ENCODE measurements at regions of chr16 and their contacts with region 1.

Region 1: GRCh38 chr16:19907161-19907992 is 22.7 kb upstream of the GPRC5B start:
- DNase-seq: peak; percentile 79
- H3K4me3 ChIP-seq: peak overlapping the region in 1 of 2 experiments; percentile 46; a peak in 1 of 4 replicates
- H3K27ac ChIP-seq: no peak overlapping the region; a peak in 1 of 4 replicates
- H3K4me1 ChIP-seq: no peaks in the 10 kb centered on the region; a peak in 1 of 4 replicates
- H3K27me3 ChIP-seq: no peaks in the 10 kb centered on the region; the same call in 1 of the 2 replicates
- CTCF ChIP-seq: peak; percentile 96
- EP300 ChIP-seq: no peak
- RAD21 ChIP-seq: peak; percentile 92

Region 2: DNA sequence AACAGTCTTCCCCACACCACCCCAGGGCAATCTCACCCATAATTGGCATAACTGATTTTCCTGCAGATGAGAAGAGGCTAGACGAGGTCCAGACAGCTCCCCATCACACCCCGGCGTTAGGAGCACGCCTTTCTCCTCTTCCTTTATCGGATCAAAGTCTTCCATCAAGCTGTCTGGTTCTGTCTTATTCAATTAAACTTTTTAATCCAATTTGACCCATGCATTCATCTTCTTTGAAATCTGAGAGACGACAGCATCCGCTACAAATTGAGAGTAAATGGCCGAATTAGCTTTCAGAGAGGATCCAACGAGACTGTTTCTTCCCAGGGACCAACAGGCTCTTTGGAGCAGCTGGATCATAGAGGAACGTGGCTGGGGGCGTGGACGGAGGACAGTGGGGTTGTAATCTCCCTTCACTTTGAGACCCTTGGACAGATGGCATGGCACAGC is 21.7 kb after region 1 on chr16:
- CTCF ChIA-PET with region 1: interaction called, 32 read pairs
- POLR2A ChIA-PET with region 1: no interaction called
- DNase-seq: peak; percentile 47
- H3K4me3 ChIP-seq: no peak overlapping the region
- H3K27ac ChIP-seq: peak overlapping the region in 1 of 2 experiments; percentile 74; a peak in 1 of 4 replicates
- H3K4me1 ChIP-seq: peaks cover 0 to 14% of the 10 kb centered on the region in 2 experiments; a peak in 2 of 4 replicates
- H3K27me3 ChIP-seq: no peaks in the 10 kb centered on the region; the same call in 1 of the 2 replicates
- CTCF ChIP-seq: no peak
- EP300 ChIP-seq: peak in 1 of 2 experiments; percentile 59; a peak in 1 of 4 replicates
- RAD21 ChIP-seq: no peak

Region 3: DNA sequence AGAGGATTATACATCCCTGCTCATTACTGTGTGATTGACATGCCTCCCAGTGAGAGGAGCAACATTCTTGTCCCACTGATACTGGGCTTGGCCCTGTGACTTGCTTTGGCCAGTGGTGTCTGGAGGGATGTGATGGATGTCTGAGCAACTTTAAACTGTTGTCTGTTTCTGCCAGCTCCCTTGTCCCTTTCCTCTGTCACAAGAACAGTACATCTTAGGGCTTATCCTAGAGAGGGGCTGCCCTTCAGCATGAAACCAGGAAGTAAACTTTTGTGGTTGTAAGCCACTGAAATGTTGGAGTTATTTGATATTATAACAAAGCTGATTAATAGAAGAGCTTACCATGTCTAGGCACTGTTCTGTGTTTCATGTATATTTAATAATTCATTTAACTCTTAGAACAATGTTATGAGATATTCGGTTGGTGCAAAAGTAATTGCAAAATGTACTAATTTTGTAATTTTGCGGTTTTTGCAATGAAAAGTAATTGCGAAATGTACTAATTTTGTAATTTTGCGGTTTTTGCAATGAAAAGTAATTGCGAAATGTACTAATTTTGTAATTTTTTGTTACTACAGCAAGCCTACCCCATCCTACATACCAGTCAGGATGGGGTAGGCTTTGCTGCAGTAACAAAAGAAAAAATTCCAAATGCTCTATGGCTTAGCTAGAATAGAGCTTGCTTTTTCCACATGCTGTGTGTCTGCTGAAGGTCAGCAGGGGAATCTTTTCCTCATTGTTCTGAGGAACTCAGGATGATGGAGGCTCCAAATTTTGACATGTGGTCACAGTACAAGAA is 60.4 kb after region 1 on chr16:
- CTCF ChIA-PET with region 1: interaction called, 10 read pairs
- POLR2A ChIA-PET with region 1: no interaction called
- DNase-seq: no peak
- H3K4me3 ChIP-seq: no peak overlapping the region
- H3K27ac ChIP-seq: no peak overlapping the region
- H3K4me1 ChIP-seq: no peaks in the 10 kb centered on the region; a peak in 1 of 4 replicates
- H3K27me3 ChIP-seq: no peaks in the 10 kb centered on the region
- CTCF ChIP-seq: no peak
- EP300 ChIP-seq: no peak
- RAD21 ChIP-seq: no peak

Region 4: DNA sequence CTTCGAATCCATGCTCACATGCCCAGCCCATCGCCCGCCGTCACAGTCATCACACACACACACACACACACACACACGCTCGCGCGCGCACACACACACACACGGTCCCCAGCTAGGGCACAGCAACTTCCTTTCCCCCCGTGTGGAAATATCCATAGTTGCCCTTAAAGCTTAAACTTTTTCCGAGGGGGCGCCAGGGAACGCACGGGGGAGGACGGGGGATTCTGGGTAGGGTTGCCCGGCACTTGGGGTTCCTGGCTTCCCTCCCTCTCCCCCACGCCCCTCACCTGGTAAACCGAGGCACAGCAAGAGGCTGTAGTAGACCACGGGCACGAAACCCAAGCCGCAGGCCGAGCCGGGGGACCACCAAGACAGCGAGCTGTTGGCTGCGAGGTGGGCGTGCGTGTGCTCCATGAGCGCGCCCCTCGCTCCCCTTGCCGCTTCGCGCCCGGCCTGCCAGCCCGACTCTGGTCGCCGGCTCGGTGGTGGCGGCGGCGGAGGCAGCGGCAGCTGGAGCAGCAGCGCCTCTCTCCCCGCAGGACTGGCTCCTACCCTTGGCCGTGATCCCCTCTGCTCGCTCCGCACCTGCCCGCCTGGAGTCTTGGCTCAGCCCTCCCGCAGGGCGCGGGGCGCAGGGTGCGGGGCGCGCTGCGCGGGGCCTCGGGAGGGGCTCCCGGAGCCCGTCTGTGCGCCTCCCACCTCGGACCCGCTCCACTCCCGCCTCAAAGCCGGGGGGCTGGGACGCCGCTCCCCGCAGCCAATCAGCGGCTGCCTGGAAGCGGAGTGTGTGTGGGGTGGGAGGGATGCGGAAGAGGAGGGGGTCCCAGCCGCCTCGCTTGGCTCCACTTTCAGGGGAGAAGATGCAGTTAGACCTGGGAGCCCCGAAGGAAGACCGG is 166.1 kb after region 1 on chr16 and contains the start of gene GPR139:
- CTCF ChIA-PET with region 1: interaction called, 23 read pairs
- POLR2A ChIA-PET with region 1: no interaction called
- DNase-seq: peak; percentile 66
- H3K4me3 ChIP-seq: peak within 1 kb of the TSS in 1 of 2 experiments; percentile 36; a peak in 1 of 4 replicates
- H3K27ac ChIP-seq: peak within 1 kb of the TSS in 1 of 2 experiments; percentile 26; a peak in 1 of 4 replicates
- H3K4me1 ChIP-seq: no peaks in the 10 kb centered on the region; a peak in 1 of 4 replicates
- H3K27me3 ChIP-seq: no peaks in the 10 kb centered on the region; the same call in 1 of the 2 replicates
- CTCF ChIP-seq: no peak
- EP300 ChIP-seq: no peak
- RAD21 ChIP-seq: no peak
- polyA plus RNA-seq, gene GPR139: not detected in 2 replicates

Region 5: GRCh38 chr16:20300312-20301097 is 393.1 kb after region 1 on chr16:
- CTCF ChIA-PET with region 1: interaction called, 473 read pairs
- POLR2A ChIA-PET with region 1: interaction called, 14 read pairs
- DNase-seq: peak; percentile 67
- H3K4me3 ChIP-seq: peak overlapping the region in 1 of 2 experiments; percentile 12; a peak in 1 of 4 replicates
- H3K27ac ChIP-seq: no peak overlapping the region
- H3K4me1 ChIP-seq: no peaks in the 10 kb centered on the region; a peak in 1 of 4 replicates
- H3K27me3 ChIP-seq: no peaks in the 10 kb centered on the region
- CTCF ChIP-seq: peak; percentile 77
- EP300 ChIP-seq: no peak
- RAD21 ChIP-seq: peak; percentile 81

Region 6: DNA sequence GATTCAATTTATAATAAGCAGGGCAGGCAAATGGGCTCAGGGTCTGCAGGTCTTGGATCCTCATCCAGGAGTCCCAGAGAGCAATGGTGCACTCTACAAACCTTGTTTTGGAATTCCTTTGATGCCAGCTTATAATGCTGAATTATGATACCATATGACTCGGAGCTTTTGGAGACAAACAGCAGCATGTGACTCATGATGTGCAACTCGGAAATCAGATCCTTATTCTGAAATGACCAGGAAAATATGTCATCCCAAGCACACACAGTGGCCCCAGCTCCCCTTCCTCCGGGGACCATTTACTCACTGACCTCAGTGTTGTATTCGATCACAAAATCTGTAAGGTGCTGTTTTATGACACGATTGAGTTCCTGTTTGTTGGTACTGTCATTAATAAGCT is 465.3 kb after region 1 on chr16:
- CTCF ChIA-PET with region 1: interaction called, 19 read pairs
- POLR2A ChIA-PET with region 1: interaction called, 4 read pairs
- DNase-seq: no peak
- H3K4me3 ChIP-seq: no peak overlapping the region
- H3K27ac ChIP-seq: no peak overlapping the region
- H3K4me1 ChIP-seq: no peaks in the 10 kb centered on the region
- H3K27me3 ChIP-seq: no peaks in the 10 kb centered on the region; the same call in 1 of the 2 replicates
- CTCF ChIP-seq: no peak
- EP300 ChIP-seq: no peak
- RAD21 ChIP-seq: no peak